Thyroid gland (tissue), 4 donors: ENCODE measurements at regions of chr2 and their contacts with region 1.

Region 1: GRCh38 chr2:200319548-200320337 is 13.2 kb downstream of the SPATS2L start:
- DNase-seq: no peak
- H3K4me3 ChIP-seq: no peak overlapping the region
- H3K27ac ChIP-seq: peak overlapping the region; percentile 25 to 26 (median 26)
- H3K4me1 ChIP-seq: peaks cover 41 to 55% of the 10 kb centered on the region in 2 donors
- H3K27me3 ChIP-seq: no peaks in the 10 kb centered on the region
- CTCF ChIP-seq: no peak
- POLR2A ChIP-seq: no peak

Region 2: GRCh38 chr2:199985625-199986207 is 334.0 kb before region 1 on chr2:
- intact Hi-C with region 1: loop called (anchors 10 kb)
- DNase-seq: peak; percentile 55 to 72
- H3K4me3 ChIP-seq: no peak overlapping the region
- H3K27ac ChIP-seq: no peak overlapping the region
- H3K4me1 ChIP-seq: peaks cover 0 to 5% of the 10 kb centered on the region in 2 donors
- H3K27me3 ChIP-seq: no peaks in the 10 kb centered on the region
- CTCF ChIP-seq: peak in 5 of 6 experiments; percentile 31 to 67 (median 61)
- POLR2A ChIP-seq: no peak

Region 3: GRCh38 chr2:200471324-200471848 is 151.6 kb after region 1 on chr2:
- intact Hi-C with region 1: loop called (anchors 10 kb)
- DNase-seq: peak in 1 of 2 donors; percentile 24
- H3K4me3 ChIP-seq: no peak overlapping the region
- H3K27ac ChIP-seq: no peak overlapping the region
- H3K4me1 ChIP-seq: no peaks in the 10 kb centered on the region
- H3K27me3 ChIP-seq: no peaks in the 10 kb centered on the region
- CTCF ChIP-seq: peak in 4 of 6 experiments; percentile 18 to 62 (median 47)
- POLR2A ChIP-seq: no peak